ENCODE measurements at regions of chr13 and their contacts with region 1.

Region 1: DNA sequence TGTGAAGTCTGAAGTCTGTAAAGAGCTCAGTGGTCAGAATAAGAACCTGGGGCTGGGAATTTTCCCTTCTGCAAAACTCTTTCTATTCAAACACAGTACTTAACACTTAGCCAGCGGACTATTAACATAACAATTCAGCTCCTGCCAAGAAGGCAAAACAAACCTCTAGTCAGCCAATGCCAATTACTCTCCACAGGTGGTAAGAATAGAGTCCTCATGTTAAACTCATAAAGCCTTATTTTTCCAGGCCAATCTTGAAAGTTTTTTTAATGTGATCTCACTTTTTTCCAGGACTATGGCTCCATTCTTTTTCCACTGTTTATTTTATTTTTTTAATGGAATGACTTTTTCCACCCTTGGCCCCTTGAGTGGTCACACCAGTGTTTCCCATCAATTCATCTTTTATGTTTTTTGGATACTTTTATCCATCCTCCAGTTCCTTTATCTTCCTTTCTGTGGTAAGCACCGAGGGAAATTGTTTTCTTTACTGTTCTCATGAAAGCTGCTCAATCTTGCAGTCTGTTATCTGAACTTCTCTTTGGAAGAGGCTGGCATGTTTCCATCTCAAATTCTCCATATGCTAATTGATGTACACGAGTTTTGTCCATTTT is 217.3 kb downstream of the LHFPL6 start:
- DNase-seq: peak; percentile 97
- H3K4me3 ChIP-seq: no peak overlapping the region
- CTCF ChIP-seq: no peak

Region 2: GRCh38 chr13:38777347-38778119 is 608.2 kb before region 1 on chr13:
- in situ Hi-C with region 1: no loop called
- DNase-seq: no peak
- H3K4me3 ChIP-seq: no peak overlapping the region
- CTCF ChIP-seq: no peak

Region 3: DNA sequence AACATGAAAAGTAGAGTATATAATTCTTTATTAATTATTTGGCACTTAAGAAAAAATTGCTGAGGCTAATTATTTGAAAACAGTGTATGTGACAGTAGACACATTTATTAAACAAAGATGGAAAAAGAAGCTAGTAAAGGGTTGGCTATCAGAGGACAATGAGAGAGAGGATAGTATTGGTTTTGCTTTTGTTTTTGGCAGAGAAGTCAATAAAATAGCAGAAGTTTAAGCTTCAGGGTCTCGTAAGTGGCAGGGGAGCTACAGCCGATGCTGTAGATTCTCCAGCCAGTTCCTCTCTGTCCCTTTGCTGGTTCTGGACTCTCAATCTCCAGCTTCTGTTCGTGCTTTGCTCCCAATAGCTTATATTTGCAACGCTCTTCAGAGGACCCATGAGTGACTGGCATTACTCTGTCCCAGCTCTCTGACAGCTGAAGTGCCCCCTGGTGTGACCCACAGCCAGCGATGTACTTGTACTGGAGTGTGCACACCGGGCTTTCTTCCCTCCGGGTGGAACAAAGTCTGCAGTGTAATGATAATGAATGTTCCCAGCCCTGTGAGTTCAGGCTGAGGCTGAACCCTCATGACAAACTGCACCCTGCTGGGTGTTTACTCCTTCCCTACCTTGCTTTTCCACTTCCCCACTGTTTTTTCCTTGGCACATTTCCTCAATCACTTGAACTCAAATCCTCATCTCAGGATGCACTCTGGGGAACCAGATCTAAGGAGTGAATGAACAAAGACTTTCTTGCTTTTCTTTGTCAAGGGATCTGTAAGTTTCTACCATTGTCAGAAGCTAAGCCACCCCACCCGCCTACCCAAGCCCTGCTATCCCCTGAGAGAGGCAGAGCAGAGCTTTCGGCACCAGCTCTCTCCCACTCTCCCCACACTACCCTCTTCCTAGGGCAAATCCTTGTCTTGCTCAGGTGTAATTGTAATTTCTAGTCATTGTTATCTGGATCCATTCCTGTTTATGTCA is 37.5 kb before region 1 on chr13:
- in situ Hi-C with region 1: loop called (anchors 5 kb)
- DNase-seq: peak; percentile 29
- H3K4me3 ChIP-seq: no peak overlapping the region
- CTCF ChIP-seq: no peak